Gastrocnemius medialis (tissue), 4 donors: ENCODE measurements at regions of chr13 and their contacts with region 1.

Region 1: DNA sequence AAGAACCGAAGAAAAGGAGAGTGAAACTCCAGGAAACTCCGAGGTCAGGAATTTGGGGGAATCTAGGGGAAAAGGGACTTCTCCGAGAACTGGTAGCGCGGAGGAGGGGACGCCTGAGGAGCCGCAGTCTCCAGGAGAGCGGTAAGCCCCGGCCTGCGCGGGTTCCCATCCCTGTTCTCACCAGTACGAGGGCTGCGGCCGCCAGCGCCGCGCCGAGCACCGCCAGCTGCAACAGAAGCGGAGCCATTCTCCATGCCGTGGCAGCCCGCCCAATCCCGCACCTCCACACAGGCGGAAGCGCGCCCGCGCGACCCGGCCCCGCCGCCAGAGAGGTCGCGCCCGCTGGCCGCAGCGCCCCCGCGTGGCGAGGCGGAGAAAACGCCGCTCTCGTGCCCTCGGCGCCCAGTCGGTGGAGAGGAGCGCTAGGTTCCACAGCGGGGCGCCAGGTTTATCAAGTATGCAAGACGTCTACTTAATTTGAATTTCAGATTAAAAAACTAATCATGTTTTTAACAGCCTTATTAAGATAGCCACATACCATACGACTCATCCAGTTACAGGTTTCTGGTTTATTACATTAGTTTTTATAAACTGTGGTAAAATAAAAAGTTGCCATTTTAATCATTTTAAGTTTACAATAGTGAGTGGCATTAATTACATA is at the start of gene ALG5:
- DNase-seq: peak; percentile 70 to 84
- ATAC-seq: peak; percentile 84 to 87
- H3K4me3 ChIP-seq: peak within 1 kb of the TSS; percentile 82 to 97 (median 91)
- H3K27ac ChIP-seq: peak within 1 kb of the TSS; percentile 90 to 97 (median 94)
- H3K4me1 ChIP-seq: peaks cover 21% of the 10 kb centered on the region in 2 donors
- H3K27me3 ChIP-seq: no peaks in the 10 kb centered on the region
- CTCF ChIP-seq: peak; percentile 82 to 99 (median 94)
- POLR2A ChIP-seq: peak; percentile 30 to 43
- total RNA-seq, gene ALG5: 9.8 to 20.9 (median 13.2) TPM

Region 2: GRCh38 chr13:35475960-35476943 is 1522.9 kb before region 1 on chr13 and contains the start of gene MAB21L1:
- in situ Hi-C with region 1: no loop called
- intact Hi-C with region 1: loop called (anchors 5 kb)
- DNase-seq: peak; percentile 80 to 81
- ATAC-seq: peak; percentile 57 to 75
- H3K4me3 ChIP-seq: peak within 1 kb of the TSS; percentile 67 to 87 (median 76)
- H3K27ac ChIP-seq: peak within 1 kb of the TSS; percentile 86 to 95 (median 88)
- H3K4me1 ChIP-seq: peaks cover 9 to 27% of the 10 kb centered on the region in 2 donors
- H3K27me3 ChIP-seq: no peaks in the 10 kb centered on the region
- CTCF ChIP-seq: no peak
- POLR2A ChIP-seq: peak; percentile 84 to 85
- total RNA-seq, gene MAB21L1: 3.2 to 4.2 (median 3.5) TPM

Region 3: DNA sequence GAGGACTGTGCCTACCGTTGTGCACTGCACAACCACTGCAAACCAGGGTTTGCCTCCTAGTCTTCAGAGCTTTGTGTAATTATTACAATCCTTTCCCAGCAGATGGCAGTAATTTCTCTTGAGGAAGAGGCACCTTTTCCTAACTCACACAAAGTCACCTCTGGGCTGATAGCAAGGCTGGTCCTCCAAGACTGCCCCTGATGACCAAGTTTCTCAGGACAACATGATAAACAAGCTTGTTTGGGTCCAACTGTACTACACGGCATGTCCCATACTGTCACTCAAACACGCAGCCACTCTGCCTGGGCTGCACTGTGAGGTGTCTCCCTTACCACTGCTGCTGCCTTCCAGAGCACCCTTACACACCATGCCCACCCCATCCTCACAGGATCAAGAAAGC is 140.9 kb before region 1 on chr13:
- in situ Hi-C with region 1: no loop called
- intact Hi-C with region 1: loop called (anchors 5 kb)
- DNase-seq: no peak
- ATAC-seq: peak; percentile 30 to 77
- H3K4me3 ChIP-seq: no peak overlapping the region
- H3K27ac ChIP-seq: no peak overlapping the region
- H3K4me1 ChIP-seq: peaks cover 0 to 3% of the 10 kb centered on the region in 2 donors
- H3K27me3 ChIP-seq: no peaks in the 10 kb centered on the region
- CTCF ChIP-seq: peak in 4 of 5 experiments; percentile 11 to 41 (median 26)
- POLR2A ChIP-seq: no peak

Region 4: DNA sequence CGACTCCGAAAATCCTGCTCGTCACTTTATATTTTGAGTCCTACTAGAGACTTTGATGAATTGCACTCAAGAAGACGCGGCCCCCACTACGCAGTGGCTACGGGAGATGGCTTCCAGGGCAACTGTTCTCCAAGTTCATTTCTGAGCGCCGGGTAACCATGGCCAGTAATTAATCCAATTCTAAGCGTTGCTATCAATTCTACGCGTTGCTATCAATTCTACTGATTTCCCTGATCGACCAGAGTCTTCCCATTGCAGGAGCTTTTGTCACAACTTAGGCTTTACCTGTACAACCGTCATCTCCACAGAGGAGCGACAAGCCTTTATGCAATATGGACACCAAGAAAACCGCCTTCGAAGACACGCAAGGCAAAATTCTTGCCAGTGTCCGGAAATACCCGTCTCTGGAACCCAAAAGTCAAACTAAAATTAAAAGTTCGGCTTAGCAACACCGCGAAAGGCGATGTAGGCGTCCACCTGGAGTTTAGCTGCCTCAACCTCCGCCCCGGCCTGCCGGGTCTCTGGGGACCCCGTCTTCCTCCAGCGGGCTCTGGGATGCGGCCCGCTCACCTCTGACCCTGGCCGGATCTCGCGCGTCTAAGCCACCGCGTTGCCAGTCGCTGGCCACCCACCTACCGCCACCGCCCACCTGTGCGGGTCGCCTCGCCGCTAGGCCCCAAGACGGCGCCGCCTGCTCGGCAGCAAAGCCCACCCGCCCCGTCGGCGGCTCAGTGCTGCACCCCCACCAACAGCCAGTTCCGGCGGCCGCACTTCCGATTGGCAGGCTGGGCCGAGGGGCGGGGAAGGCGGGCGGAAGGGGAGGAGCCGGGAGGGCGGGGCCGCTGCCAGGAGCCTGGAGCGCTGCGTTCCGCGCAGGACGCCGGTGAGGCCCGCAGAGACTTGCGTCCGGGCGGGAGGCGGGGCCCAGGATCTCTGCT is 60.0 kb after region 1 on chr13 and contains the start of gene SUPT20H:
- in situ Hi-C with region 1: no loop called
- intact Hi-C with region 1: loop called (anchors 1 kb)
- DNase-seq: peak; percentile 90
- ATAC-seq: peak; percentile 97 to 99
- H3K4me3 ChIP-seq: peak within 1 kb of the TSS; percentile 82 to 99 (median 87)
- H3K27ac ChIP-seq: peak within 1 kb of the TSS; percentile 86 to 98 (median 94)
- H3K4me1 ChIP-seq: peaks cover 8 to 10% of the 10 kb centered on the region in 2 donors
- H3K27me3 ChIP-seq: no peaks in the 10 kb centered on the region
- CTCF ChIP-seq: peak in 1 of 5 experiments; percentile 13
- POLR2A ChIP-seq: peak; percentile 66 to 79
- total RNA-seq, gene SUPT20H: 18.1 to 24.4 (median 19.1) TPM